ENCODE measurements at regions of chr7 and their contacts with region 1.

Region 1: GRCh38 chr7:139230774-139231512 is at the start of gene UBN2:
- DNase-seq: peak; percentile 87
- H3K4me3 Mint-ChIP-seq: peak within 1 kb of the TSS; percentile 100
- H3K27ac Mint-ChIP-seq: peak within 1 kb of the TSS; percentile 83
- H3K4me1 Mint-ChIP-seq: peaks cover 21% of the 10 kb centered on the region
- H3K27me3 Mint-ChIP-seq: peaks cover 17% of the 10 kb centered on the region
- total RNA-seq, gene UBN2: 13.6 and 14.1 TPM in 2 replicates

Region 2: GRCh38 chr7:138981332-138982203 is 249.4 kb before region 1 on chr7 and contains the start of gene KIAA1549:
- intact Hi-C with region 1: loop called (anchors 5 kb)
- DNase-seq: peak; percentile 41
- H3K4me3 Mint-ChIP-seq: peak within 1 kb of the TSS; percentile 81
- H3K27ac Mint-ChIP-seq: peak within 1 kb of the TSS; percentile 47
- H3K4me1 Mint-ChIP-seq: peaks cover 15% of the 10 kb centered on the region
- H3K27me3 Mint-ChIP-seq: peaks cover 61% of the 10 kb centered on the region
- total RNA-seq, gene KIAA1549: 1.3 TPM in 2 replicates

Region 3: GRCh38 chr7:139133335-139134139 is 97.4 kb before region 1 on chr7:
- intact Hi-C with region 1: loop called (anchors 1 kb)
- DNase-seq: peak; percentile 82
- H3K4me3 Mint-ChIP-seq: peak overlapping the region; percentile 85
- H3K27ac Mint-ChIP-seq: peak overlapping the region; percentile 65
- H3K4me1 Mint-ChIP-seq: peaks cover 26% of the 10 kb centered on the region
- H3K27me3 Mint-ChIP-seq: peaks cover 4% of the 10 kb centered on the region

Region 4: GRCh38 chr7:139340037-139340807 is 109.3 kb after region 1 on chr7:
- intact Hi-C with region 1: loop called (anchors 1 kb)
- DNase-seq: peak; percentile 97
- H3K4me3 Mint-ChIP-seq: peak overlapping the region; percentile 97
- H3K27ac Mint-ChIP-seq: peak overlapping the region; percentile 100
- H3K4me1 Mint-ChIP-seq: peaks cover 21% of the 10 kb centered on the region
- H3K27me3 Mint-ChIP-seq: peaks cover 3% of the 10 kb centered on the region

Region 5: DNA sequence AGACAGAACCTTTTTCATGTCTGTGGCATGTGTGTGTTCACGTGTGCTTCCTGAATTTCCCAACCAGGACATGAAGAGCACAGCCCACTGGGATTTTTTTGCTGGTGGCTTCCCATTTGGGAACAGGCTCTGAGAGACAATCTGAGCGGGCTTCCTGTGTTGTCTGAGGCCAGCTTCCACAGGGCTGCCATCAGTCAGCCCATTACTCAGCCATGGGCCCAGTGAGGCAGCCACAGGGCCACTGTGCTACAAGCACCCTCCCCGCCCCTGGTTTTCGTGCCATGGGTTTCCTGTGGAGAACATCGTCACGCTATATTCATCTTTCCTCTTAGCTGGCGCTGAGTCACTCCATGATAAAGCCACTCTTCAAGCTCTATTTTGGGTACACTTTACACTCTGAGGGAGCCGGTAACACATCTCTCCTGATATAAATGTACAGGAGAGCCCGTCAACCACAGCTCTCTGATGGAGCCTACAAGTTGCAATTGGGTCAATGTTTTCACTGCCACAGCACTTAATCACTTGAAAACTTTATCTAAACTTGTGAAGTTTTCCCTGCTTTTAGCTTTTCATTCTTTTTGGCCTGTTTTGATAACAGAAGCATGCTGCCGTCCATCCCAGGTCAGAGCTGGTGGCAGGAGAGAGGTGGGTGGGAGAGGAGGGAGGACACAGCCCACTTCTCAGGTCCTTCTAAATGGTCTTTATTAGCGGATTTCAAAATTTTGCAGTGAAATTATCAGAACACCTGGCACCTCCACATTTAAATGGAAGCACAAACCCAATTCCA is 449.9 kb after region 1 on chr7:
- intact Hi-C with region 1: loop called (anchors 5 kb)
- DNase-seq: peak; percentile 67
- H3K4me3 Mint-ChIP-seq: peak overlapping the region; percentile 27
- H3K27ac Mint-ChIP-seq: peak overlapping the region; percentile 92
- H3K4me1 Mint-ChIP-seq: peaks cover 61% of the 10 kb centered on the region
- H3K27me3 Mint-ChIP-seq: no peaks in the 10 kb centered on the region

Measured in activated T-helper 2 cell treated with anti-CD3 and anti-CD28 coated beads, Interferon-gamma antibody, Interleukin-2, Interleukin-4, amounts not matched to agents 10 μg/mL and 5 μg/mL and 100 μg/mL, durations not matched to agents 14 hours and 24 hours and 36 hours (primary cell).